ENCODE measurements at regions of chr18 and their contacts with region 1.

Region 1: GRCh38 chr18:864872-865273 is 39.8 kb upstream of the ADCYAP1 start:
- DNase-seq: peak; percentile 37 to 80 (median 68)
- H3K4me3 ChIP-seq: no peak overlapping the region
- H3K27ac ChIP-seq: no peak overlapping the region
- H3K27me3 ChIP-seq: peaks cover 0 to 46% (median 0%) of the 10 kb centered on the region in 45 donors
- CTCF ChIP-seq: peak; percentile 48 to 96 (median 86)

Region 2: DNA sequence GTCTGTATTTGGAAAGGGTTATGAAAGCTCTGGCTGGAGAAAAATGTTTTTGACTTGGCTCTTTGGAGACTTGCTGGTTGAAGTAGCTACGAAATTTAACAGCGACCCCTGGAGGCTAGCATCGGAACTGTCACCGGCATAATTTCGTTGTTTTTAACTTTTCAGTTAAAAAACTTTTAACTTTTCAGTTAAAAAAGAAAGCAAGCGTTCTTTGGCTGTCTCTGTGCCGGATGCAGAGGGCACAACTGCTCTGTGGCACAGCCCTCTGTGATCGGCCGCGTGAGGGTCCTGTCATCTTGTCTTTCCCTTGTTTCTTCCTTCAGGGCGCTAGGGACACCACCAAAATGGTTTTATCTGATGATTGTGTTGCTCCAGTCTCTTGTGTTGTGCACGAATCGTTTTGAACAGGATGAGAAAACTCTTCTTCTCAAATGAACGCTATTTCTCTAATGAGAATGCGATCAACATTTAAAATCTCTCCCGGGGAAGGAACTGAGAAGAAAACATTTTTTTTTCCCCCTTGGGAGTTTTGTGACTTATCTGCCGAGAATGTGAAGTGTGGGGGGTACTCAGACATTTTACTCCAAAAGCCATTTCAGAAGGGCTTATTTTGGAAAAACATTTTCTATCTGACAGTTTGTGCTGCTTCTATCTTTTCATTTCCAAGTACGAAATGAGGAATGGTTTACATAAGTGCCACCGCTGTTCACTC is 96.9 kb after region 1 on chr18:
- intact Hi-C with region 1: loop called in 1 of 2 experiments (anchors 5 kb)
- DNase-seq: peak in 4 of 10 donors; percentile 15 to 46 (median 34)
- H3K4me3 ChIP-seq: peak overlapping the region in 52 of 59 donors; percentile 2 to 62 (median 38)
- H3K27ac ChIP-seq: peak overlapping the region in 2 of 59 donors; percentile 0 to 5
- H3K27me3 ChIP-seq: peaks cover 0 to 30% (median 4%) of the 10 kb centered on the region in 45 donors
- CTCF ChIP-seq: peak; percentile 68 to 96 (median 85)

Measured in dorsolateral prefrontal cortex (tissue), 120 donors.